ENCODE measurements at regions of chr10 and their contacts with region 1.

Region 1: DNA sequence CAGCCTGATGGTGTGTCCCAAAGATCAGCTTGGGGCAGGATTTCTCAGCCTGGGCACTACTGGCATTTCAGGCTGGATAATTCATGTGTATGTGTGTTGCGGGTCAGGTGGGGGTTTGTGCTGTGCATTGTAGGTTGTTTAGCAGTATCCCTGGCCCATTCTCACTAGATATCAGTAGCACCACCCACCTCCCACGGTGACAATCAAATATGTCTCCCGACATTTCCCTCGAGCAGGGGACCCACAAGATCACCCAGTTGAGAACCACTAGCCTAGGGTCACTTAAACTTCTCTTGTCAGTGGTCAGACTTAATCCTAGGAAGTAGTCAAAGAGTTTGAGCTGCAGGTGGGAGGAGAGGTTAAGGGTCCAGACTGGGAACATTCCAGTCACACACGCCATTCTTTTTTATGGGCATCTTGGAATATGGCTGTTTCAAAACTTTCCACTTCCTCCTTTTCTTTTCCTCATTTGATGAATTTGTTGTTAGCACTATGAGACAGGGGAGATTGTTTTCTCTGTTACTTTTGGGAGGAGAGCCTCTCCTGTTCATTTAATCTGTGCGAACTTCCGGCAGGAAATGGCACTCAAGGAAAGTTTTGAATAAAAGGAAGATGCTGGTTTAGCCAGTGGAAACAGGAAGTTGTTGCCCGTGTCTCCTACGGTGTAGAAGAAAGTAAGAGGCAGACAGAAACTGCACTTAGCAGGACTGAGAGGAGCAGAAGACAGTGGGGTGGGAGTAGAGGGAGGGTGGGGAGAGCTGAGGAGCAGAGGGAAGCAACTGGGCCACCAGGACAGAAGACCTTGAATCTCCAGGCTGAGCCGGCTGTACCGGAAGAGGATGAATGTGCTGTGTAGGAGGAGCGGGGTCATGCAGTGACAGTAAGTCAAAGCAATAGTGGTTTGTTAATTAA is 17.6 kb upstream of the EXOC6 start:
- DNase-seq: peak; percentile 91
- H3K4me3 ChIP-seq: peak overlapping the region; percentile 19 to 91 (median 69)
- H3K27ac ChIP-seq: peak overlapping the region; percentile 91
- H3K4me1 ChIP-seq: peaks cover 63% of the 10 kb centered on the region
- H3K27me3 ChIP-seq: no peaks in the 10 kb centered on the region
- CTCF ChIP-seq: no peak
- POLR2A ChIP-seq: no peak

Region 2: GRCh38 chr10:91805110-91805838 is 1025.5 kb before region 1 on chr10:
- CTCF ChIA-PET with region 1: no interaction called
- POLR2A ChIA-PET with region 1: no interaction called
- dilution Hi-C with region 1: no loop called
- intact Hi-C with region 1: no loop called
- DNase-seq: no peak
- H3K4me3 ChIP-seq: no peak overlapping the region
- H3K27ac ChIP-seq: no peak overlapping the region
- H3K4me1 ChIP-seq: peaks cover 8% of the 10 kb centered on the region
- H3K27me3 ChIP-seq: no peaks in the 10 kb centered on the region
- CTCF ChIP-seq: no peak
- POLR2A ChIP-seq: no peak

Region 3: GRCh38 chr10:92530421-92530820 is 300.3 kb before region 1 on chr10:
- CTCF ChIA-PET with region 1: no interaction called
- POLR2A ChIA-PET with region 1: interaction called, 16 read pairs
- dilution Hi-C with region 1: no loop called
- intact Hi-C with region 1: no loop called
- DNase-seq: no peak
- H3K4me3 ChIP-seq: no peak overlapping the region
- H3K27ac ChIP-seq: no peak overlapping the region
- H3K4me1 ChIP-seq: no peaks in the 10 kb centered on the region
- H3K27me3 ChIP-seq: no peaks in the 10 kb centered on the region
- CTCF ChIP-seq: no peak
- POLR2A ChIP-seq: no peak

Region 4: GRCh38 chr10:92573798-92574547 is 256.8 kb before region 1 on chr10 and contains the start of gene IDE:
- CTCF ChIA-PET with region 1: no interaction called
- POLR2A ChIA-PET with region 1: no interaction called
- dilution Hi-C with region 1: no loop called
- intact Hi-C with region 1: loop called (anchors 5 kb)
- DNase-seq: peak; percentile 92
- H3K4me3 ChIP-seq: peak within 1 kb of the TSS; percentile 63 to 84 (median 68)
- H3K27ac ChIP-seq: peak within 1 kb of the TSS; percentile 89
- H3K4me1 ChIP-seq: peaks cover 18% of the 10 kb centered on the region
- H3K27me3 ChIP-seq: no peaks in the 10 kb centered on the region
- CTCF ChIP-seq: peak; percentile 83 to 87
- POLR2A ChIP-seq: peak; percentile 84
- total RNA-seq, gene IDE: 52.6 and 53.5 TPM in 2 replicates

Region 5: DNA sequence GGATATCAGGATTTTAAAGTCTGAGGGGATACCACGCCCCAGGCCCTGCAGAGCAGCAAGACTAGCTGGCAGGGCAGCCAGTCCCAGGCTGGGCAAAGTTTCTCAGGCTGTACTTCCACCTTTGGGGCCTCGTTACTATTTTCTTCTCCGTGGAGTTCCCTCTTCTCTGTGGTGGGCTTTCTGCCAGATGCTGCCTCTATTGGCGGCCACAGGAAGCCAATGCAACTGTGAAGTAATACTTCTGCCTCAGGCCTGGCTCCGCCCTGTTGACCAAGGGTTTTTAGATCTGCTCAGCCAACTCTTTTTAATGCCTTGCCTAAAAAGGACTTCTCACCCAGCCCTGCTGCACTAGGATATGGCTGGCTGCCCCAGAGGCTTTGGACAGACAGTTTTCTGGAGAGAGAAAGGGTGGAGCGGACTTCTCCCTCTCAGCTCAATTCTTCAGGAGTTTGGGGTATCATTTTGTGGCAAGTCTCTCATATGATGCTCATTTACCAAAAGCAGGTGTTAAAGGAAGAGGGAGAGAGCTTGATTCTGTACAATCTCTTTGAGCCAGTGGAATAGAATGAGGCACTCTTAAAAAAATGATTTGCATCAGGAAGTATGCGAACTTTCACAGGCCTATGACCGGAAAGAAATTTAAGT is 73.5 kb before region 1 on chr10:
- CTCF ChIA-PET with region 1: interaction called, 3 read pairs
- POLR2A ChIA-PET with region 1: interaction called, 3 read pairs
- dilution Hi-C with region 1: no loop called
- intact Hi-C with region 1: loop called (anchors 2 kb)
- DNase-seq: peak; percentile 93
- H3K4me3 ChIP-seq: peak overlapping the region in 1 of 3 experiments; percentile 41
- H3K27ac ChIP-seq: peak overlapping the region; percentile 98
- H3K4me1 ChIP-seq: peaks cover 46% of the 10 kb centered on the region
- H3K27me3 ChIP-seq: no peaks in the 10 kb centered on the region
- CTCF ChIP-seq: peak in 1 of 2 donors; percentile 18
- POLR2A ChIP-seq: no peak

Region 6: DNA sequence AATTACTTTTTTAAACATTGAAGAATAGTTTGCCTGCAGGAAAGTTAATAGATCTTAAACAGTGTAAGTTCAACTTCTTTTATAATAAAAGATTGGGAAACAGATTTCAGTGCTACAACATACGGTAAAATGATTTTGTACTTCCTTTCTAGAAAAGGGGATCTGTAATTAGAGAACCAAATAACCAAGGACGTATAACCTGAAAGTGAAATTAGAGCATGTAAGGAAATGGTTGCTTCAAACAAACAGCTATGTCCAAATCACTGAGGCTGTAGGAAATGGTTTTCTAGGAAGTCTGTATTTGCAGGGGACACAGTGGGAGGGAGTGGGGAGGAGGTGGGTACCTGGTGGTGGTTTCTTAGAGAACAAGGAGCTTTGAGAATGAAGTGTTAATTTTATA is 40.3 kb before region 1 on chr10:
- CTCF ChIA-PET with region 1: no interaction called
- POLR2A ChIA-PET with region 1: no interaction called
- dilution Hi-C with region 1: no loop called
- intact Hi-C with region 1: no loop called
- DNase-seq: no peak
- H3K4me3 ChIP-seq: no peak overlapping the region
- H3K27ac ChIP-seq: no peak overlapping the region
- H3K4me1 ChIP-seq: no peaks in the 10 kb centered on the region
- H3K27me3 ChIP-seq: no peaks in the 10 kb centered on the region
- CTCF ChIP-seq: no peak
- POLR2A ChIP-seq: no peak

Region 7: DNA sequence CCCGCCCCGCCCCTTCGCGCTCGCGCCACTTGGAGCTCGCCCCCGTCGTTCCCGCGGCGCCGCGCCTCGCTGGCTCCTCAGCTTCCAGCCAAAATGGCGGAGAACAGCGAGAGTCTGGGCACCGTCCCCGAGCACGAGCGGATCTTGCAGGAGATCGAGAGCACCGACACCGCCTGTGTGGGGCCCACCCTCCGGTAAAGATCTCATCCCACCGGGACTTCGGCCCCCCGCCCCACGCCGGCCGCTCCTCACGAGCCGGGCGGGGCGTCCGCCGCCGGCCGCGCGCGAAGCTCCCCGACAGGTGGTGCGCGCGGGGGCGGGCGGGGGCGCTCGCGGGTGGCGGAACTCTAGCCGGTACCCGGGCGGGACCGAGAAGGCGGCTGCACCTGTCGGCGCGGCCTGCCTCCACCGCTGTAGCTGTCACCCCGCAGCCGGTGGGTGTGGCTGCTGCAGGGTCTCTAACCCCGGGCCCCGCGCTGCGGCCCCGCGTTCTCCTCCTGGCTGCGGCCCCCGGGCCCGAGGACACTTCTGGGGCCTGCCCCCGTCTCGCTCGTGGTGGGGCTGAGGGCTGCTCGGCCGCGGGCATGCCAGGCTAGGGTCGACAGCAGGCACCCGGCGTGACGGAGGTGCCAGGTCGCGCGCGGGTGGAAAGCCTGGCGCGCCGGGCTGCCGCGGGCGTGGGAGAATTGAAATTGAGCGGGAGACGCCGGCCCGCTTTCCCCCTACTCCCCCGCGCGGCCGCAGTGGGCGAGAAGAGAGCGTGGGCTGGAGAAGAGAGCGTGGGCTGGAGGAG is 17.9 kb after region 1 on chr10 and contains the start of gene EXOC6:
- CTCF ChIA-PET with region 1: interaction called, 45 read pairs
- POLR2A ChIA-PET with region 1: no interaction called
- dilution Hi-C with region 1: no loop called
- intact Hi-C with region 1: no loop called
- DNase-seq: peak; percentile 86
- H3K4me3 ChIP-seq: peak within 1 kb of the TSS; percentile 77 to 85 (median 83)
- H3K27ac ChIP-seq: no peak within 1 kb of the TSS
- H3K4me1 ChIP-seq: peaks cover 28% of the 10 kb centered on the region
- H3K27me3 ChIP-seq: no peaks in the 10 kb centered on the region
- CTCF ChIP-seq: no peak
- POLR2A ChIP-seq: peak; percentile 77
- total RNA-seq, gene EXOC6: 103 and 108 TPM in 2 replicates

Region 8: GRCh38 chr10:93267521-93267920 is 436.8 kb after region 1 on chr10:
- CTCF ChIA-PET with region 1: no interaction called
- POLR2A ChIA-PET with region 1: no interaction called
- dilution Hi-C with region 1: no loop called
- intact Hi-C with region 1: no loop called
- DNase-seq: no peak
- H3K4me3 ChIP-seq: no peak overlapping the region
- H3K27ac ChIP-seq: no peak overlapping the region
- H3K4me1 ChIP-seq: no peaks in the 10 kb centered on the region
- H3K27me3 ChIP-seq: peaks cover 2 to 9% of the 10 kb centered on the region in 2 experiments
- CTCF ChIP-seq: no peak
- POLR2A ChIP-seq: no peak

Measured in endothelial cell of umbilical vein (primary cell).